Activated CD4-positive, alpha-beta memory T cell treated with anti-CD3 and anti-CD28 coated beads for 36 hours (primary cell): ENCODE measurements at regions of chr2 and their contacts with region 1.

Region 1: DNA sequence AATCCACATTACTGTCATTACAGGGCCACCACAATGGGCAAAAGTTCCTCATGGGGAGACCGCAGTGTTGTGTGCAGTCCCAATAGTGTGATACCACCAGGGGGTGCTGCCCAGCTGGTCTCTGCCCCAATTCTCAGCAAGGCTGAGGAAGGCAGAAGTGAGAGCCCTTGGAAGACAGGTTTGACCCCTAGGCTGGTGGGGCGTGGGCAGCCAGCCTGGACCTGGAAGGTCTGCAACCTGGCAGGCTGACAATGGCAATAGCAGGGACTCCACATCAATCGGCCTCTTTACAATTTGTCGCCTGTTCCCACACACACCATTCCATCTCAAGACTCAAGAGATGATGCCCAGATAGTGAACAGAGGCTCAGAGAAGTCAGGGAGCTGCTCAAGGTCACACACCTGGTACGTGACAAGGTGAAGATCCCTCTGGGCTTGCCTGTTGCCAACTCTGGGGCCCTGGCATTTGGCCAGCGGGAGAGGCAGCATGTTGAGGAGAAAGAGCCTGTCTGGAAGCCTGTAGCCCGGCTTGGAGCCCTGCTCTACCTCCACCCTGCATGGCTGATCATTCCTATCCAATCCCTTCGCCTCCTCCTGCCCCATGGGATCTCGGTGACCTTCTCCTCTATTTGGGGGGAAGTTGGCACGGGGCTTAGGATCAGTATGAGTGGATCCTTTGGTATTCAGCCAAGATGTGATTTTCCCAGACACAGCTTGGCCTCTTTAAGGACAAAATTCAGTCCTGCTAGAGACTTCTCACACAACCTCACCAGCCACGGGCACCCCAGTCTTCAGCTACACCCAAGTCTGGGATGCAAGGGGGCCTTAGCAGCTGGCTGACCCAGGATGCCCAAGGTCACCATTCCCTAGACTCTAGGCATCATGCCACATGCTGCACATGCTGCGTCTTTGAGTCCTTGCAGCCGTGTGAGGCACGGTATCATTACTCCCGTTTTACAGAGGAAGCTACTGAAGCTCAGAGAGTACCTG is 2.9 kb upstream of the ATOH8 start:
- DNase-seq: peak; percentile 68
- H3K4me3 Mint-ChIP-seq: no peak overlapping the region
- H3K27ac Mint-ChIP-seq: no peak overlapping the region
- H3K4me1 Mint-ChIP-seq: peaks cover 13% of the 10 kb centered on the region
- H3K27me3 Mint-ChIP-seq: peaks cover 41% of the 10 kb centered on the region

Region 2: DNA sequence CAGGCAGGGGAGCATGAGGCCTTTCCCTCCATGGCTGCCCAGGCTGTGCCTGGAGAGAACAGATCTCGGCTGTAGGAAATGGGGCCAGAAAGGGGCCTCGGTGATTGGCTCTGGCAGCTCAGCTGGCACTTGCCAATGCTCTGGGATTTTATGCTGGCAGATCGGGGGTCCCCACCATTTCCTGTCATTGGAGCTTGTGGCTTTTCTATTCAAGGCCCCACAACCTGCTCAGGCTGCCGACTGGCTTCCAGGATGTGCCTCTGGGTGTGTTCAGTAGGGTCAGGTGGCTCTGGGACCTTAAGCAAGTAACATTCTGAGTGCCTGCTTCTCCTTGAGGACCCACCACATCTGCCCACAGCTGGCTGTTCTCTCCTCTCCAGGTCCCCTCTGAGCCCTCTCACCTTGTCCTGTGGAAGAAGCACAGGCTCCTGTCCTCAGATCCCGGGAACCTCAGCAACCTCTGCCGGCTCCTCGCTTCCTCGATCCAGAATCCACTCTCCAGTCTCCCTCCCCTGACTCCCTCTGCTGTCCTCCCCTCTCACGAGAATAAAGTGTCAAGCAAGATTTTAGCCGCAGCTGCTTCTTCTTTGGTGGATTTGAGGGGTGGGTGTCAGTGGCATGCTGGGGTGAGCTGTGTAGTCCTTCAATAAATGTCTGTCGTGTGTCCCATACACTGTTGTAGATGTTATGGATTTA is 52.5 kb before region 1 on chr2:
- CTCF ChIA-PET with region 1: no interaction called
- POLR2A ChIA-PET with region 1: no interaction called
- intact Hi-C with region 1: no loop called
- DNase-seq: no peak
- H3K4me3 Mint-ChIP-seq: no peak overlapping the region
- H3K27ac Mint-ChIP-seq: no peak overlapping the region
- H3K4me1 Mint-ChIP-seq: peaks cover 16% of the 10 kb centered on the region
- H3K27me3 Mint-ChIP-seq: no peaks in the 10 kb centered on the region

Region 3: DNA sequence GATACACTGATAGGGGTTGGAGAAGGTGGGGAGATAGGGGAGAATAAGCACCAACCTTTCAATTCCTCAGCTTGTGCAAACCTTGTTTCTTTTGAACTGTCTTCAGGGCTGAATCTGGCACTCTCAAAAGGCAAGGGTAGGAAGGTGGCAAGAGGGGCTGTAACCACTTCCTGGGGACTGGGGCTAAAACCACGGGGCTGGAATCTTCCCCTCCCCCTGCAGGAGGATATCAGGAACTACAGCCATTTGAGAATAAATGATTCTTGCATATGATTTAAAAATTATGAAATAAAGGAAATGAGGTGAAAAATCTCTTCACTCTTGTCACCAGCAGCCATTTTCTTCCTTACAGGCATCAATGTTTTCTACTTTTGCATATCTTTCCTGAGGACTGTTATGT is 53.7 kb after region 1 on chr2:
- CTCF ChIA-PET with region 1: interaction called, 4 read pairs
- POLR2A ChIA-PET with region 1: no interaction called
- intact Hi-C with region 1: loop called (anchors 2 kb)
- DNase-seq: peak; percentile 40
- H3K4me3 Mint-ChIP-seq: no peak overlapping the region
- H3K27ac Mint-ChIP-seq: no peak overlapping the region
- H3K4me1 Mint-ChIP-seq: peaks cover 5% of the 10 kb centered on the region
- H3K27me3 Mint-ChIP-seq: peaks cover 6% of the 10 kb centered on the region